MCF 10A (cell line): ENCODE measurements at regions of chr15 and their contacts with region 1.

Region 1: GRCh38 chr15:45030743-45031142 is 7.7 kb downstream of the SORD start:
- DNase-seq: no peak
- H3K4me3 Mint-ChIP-seq: no peak overlapping the region
- H3K27ac Mint-ChIP-seq: peak overlapping the region; percentile 19
- H3K4me1 Mint-ChIP-seq: no peaks in the 10 kb centered on the region
- H3K27me3 Mint-ChIP-seq: no peaks in the 10 kb centered on the region
- CTCF ChIP-seq: no peak

Region 2: GRCh38 chr15:44968475-44968874 is 62.3 kb before region 1 on chr15:
- CTCF ChIA-PET with region 1: interaction called, 23 read pairs
- POLR2A ChIA-PET with region 1: no interaction called
- intact Hi-C with region 1: no loop called
- DNase-seq: no peak
- H3K4me3 Mint-ChIP-seq: no peak overlapping the region
- H3K27ac Mint-ChIP-seq: no peak overlapping the region
- H3K4me1 Mint-ChIP-seq: no peaks in the 10 kb centered on the region
- H3K27me3 Mint-ChIP-seq: no peaks in the 10 kb centered on the region
- CTCF ChIP-seq: no peak

Region 3: DNA sequence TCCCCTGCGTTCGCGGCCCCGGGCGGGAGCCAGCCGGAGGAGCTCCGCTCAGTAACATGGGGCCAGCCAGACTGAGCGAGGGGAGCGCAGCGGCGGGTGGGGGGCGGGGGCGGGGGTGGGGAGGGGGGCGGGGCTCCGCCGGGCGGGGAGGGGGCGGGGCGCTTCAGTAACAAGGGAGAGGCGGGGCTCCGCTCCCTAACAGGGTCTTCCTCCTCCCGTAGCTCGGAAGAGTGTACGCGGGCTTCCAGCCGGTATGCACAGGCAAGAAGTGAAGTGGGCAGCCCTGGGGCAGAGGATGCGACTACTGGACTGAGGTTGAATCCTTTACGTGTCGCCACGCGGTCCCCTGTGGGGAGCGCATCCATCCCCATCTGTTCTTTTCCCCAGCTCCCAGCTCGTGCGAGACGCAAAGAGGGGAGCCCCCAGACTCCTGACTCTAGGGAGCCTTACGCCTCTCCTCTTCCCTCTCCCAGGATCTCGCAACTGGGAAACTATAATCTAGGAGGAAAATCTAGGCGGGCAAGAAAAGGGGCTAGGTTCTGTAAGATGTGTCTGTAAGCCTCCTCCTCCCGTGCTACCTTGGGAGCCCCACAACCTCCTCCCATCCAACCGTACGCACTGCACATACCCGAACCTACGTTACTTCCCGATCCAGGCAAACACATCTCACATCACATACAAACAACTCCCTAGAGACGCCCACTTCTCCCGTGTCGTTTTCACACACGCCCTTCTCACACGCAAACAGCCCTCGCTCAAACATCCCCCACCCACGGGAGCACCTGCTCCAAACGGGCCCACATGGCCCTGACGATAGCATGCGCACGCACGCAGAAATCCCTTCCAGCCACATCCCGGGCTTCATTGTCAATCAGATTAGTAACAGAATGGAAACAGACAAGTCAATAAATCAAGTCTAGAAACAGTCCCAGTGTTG is 157.4 kb after region 1 on chr15 and contains the start of gene SHF:
- CTCF ChIA-PET with region 1: no interaction called
- POLR2A ChIA-PET with region 1: no interaction called
- intact Hi-C with region 1: no loop called
- DNase-seq: no peak
- H3K4me3 Mint-ChIP-seq: peak within 1 kb of the TSS; percentile 76
- H3K27ac Mint-ChIP-seq: peak within 1 kb of the TSS; percentile 54
- H3K4me1 Mint-ChIP-seq: peaks cover 19% of the 10 kb centered on the region
- H3K27me3 Mint-ChIP-seq: no peaks in the 10 kb centered on the region
- CTCF ChIP-seq: no peak
- total RNA-seq, gene SHF: 0.34 and 0.44 TPM in 2 replicates